Mammary epithelial cell (primary cell): ENCODE measurements at regions of chr2 and their contacts with region 1.

Region 1: GRCh38 chr2:133844214-133844892 is 276.1 kb upstream of the NCKAP5 start:
- DNase-seq: peak; percentile 73
- H3K4me3 ChIP-seq: no peak overlapping the region
- H3K27ac ChIP-seq: no peak overlapping the region
- H3K4me1 ChIP-seq: peaks cover 15% of the 10 kb centered on the region
- H3K27me3 ChIP-seq: no peaks in the 10 kb centered on the region
- CTCF ChIP-seq: peak; percentile 85 to 92

Region 2: GRCh38 chr2:132267105-132267497 is 1577.3 kb before region 1 on chr2:
- CTCF ChIA-PET with region 1: no interaction called
- dilution Hi-C with region 1: no loop called
- in situ Hi-C with region 1: no loop called
- intact Hi-C with region 1: loop called (anchors 1 kb)
- DNase-seq: no peak
- H3K4me3 ChIP-seq: no peak overlapping the region
- H3K27ac ChIP-seq: no peak overlapping the region
- H3K4me1 ChIP-seq: peaks cover 4% of the 10 kb centered on the region
- H3K27me3 ChIP-seq: no peaks in the 10 kb centered on the region
- CTCF ChIP-seq: no peak

Region 3: GRCh38 chr2:132651115-132652045 is 1193.0 kb before region 1 on chr2:
- CTCF ChIA-PET with region 1: no interaction called
- dilution Hi-C with region 1: no loop called
- in situ Hi-C with region 1: no loop called
- intact Hi-C with region 1: loop called (anchors 1 kb)
- DNase-seq: no peak
- H3K4me3 ChIP-seq: no peak overlapping the region
- H3K27ac ChIP-seq: no peak overlapping the region
- H3K4me1 ChIP-seq: no peaks in the 10 kb centered on the region
- H3K27me3 ChIP-seq: no peaks in the 10 kb centered on the region
- CTCF ChIP-seq: no peak

Region 4: GRCh38 chr2:133193544-133194361 is 650.6 kb before region 1 on chr2:
- CTCF ChIA-PET with region 1: no interaction called
- dilution Hi-C with region 1: no loop called
- in situ Hi-C with region 1: no loop called
- intact Hi-C with region 1: loop called (anchors 5 kb)
- DNase-seq: peak; percentile 12
- H3K4me3 ChIP-seq: no peak overlapping the region
- H3K27ac ChIP-seq: no peak overlapping the region
- H3K4me1 ChIP-seq: peaks cover 11% of the 10 kb centered on the region
- H3K27me3 ChIP-seq: no peaks in the 10 kb centered on the region
- CTCF ChIP-seq: no peak

Region 5: DNA sequence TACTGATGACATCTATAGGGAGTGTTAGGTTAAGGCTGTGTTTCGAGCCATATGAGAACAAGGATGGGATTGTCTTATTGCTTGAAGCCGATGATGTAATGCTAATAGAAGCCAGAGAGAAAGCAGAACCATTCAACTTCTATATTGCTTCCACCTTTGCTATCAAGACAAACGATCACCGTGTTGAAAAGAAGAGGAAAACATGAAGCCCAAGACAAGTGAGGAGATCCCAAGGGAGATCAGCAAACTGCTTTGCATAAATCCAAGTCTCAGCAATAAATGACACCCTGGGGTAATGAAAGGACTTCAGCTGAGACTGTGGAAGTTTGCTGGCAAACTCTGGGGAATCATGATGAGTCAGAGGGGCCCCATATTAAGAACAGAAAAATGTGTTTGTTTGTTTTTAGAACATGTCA is 482.3 kb before region 1 on chr2:
- CTCF ChIA-PET with region 1: no interaction called
- dilution Hi-C with region 1: no loop called
- in situ Hi-C with region 1: no loop called
- intact Hi-C with region 1: loop called (anchors 5 kb)
- DNase-seq: peak; percentile 86
- H3K4me3 ChIP-seq: peak overlapping the region in 2 of 3 experiments; percentile 13 to 33
- H3K27ac ChIP-seq: peak overlapping the region; percentile 90
- H3K4me1 ChIP-seq: peaks cover 18% of the 10 kb centered on the region
- H3K27me3 ChIP-seq: no peaks in the 10 kb centered on the region
- CTCF ChIP-seq: no peak

Region 6: GRCh38 chr2:133780099-133780839 is 64.1 kb before region 1 on chr2:
- CTCF ChIA-PET with region 1: no interaction called
- dilution Hi-C with region 1: no loop called
- in situ Hi-C with region 1: no loop called
- intact Hi-C with region 1: loop called (anchors 1 kb)
- DNase-seq: peak; percentile 70
- H3K4me3 ChIP-seq: no peak overlapping the region
- H3K27ac ChIP-seq: no peak overlapping the region
- H3K4me1 ChIP-seq: no peaks in the 10 kb centered on the region
- H3K27me3 ChIP-seq: no peaks in the 10 kb centered on the region
- CTCF ChIP-seq: peak; percentile 81

Region 7: DNA sequence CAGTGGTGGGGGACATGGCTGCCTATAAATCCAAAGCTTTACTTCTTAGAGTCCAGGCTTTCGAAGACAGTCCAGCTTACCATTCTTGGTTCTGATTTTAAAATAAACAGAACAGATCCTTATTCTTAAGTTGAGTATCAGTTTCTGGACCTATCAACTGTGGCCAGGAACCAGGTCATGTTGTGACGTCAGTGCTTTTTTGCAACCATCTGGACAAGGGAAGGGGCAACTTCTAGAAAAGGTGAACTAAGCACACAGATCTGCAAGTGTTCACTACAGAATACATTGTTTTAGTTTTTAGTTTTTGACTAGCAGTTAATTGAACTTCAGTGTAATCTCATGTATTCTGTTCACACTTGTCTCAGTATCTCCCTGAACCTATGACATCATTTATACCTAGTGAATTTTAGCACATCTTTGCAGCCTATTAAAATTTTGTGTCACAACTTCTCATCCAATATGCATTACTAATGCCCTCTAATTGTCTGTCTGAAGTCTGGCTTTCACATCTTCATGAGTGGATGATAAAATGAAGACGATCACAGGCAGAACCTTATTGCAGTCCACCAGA is 83.6 kb after region 1 on chr2:
- CTCF ChIA-PET with region 1: no interaction called
- dilution Hi-C with region 1: no loop called
- in situ Hi-C with region 1: no loop called
- intact Hi-C with region 1: no loop called
- DNase-seq: no peak
- H3K4me3 ChIP-seq: no peak overlapping the region
- H3K27ac ChIP-seq: no peak overlapping the region
- H3K4me1 ChIP-seq: no peaks in the 10 kb centered on the region
- H3K27me3 ChIP-seq: peaks cover 3% of the 10 kb centered on the region
- CTCF ChIP-seq: no peak